ENCODE measurements at regions of chr21 and their contacts with region 1.

Region 1: GRCh38 chr21:41283211-41283818 is 33.3 kb upstream of the FAM3B start:
- H3K4me3 ChIP-seq: no peak overlapping the region
- H3K27ac ChIP-seq: no peak overlapping the region
- H3K4me1 ChIP-seq: no peaks in the 10 kb centered on the region
- CTCF ChIP-seq: peak; percentile 58

Region 2: DNA sequence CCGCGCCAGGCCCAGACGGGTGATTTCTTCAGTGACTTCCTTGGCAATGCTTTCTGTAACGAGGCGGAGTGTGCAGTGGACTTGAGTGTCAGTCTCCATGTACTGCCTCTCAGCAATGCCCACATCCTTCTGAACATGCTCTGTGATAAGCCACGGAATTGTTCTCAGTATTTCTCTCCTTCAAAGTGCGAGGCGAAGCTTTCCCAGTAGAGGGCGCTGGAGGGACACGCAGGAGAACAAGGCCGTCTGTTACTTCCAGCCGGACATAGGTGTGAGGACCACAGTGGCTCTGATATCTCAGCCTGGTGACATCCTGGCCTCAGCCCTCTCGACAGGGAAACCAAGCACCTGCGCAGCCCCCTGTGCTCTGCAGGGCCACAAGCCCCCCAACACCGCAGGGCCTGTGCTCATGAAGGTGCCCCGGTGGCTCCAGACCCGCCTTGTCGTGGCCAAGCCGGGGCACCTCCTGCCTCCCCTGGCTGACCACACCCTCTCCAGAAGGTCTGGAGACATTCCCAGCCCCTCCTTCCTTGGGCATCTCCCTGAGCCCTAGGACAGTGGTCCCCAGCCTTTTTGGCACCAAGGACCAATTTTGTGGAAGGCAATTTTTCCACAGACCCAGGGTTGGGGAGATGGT is 161.4 kb before region 1 on chr21:
- CTCF ChIA-PET with region 1: interaction called, 19 read pairs
- POLR2A ChIA-PET with region 1: no interaction called
- H3K4me3 ChIP-seq: no peak overlapping the region
- H3K27ac ChIP-seq: no peak overlapping the region
- H3K4me1 ChIP-seq: no peaks in the 10 kb centered on the region
- CTCF ChIP-seq: peak; percentile 76; the same call in 1 of the 2 replicates

Region 3: DNA sequence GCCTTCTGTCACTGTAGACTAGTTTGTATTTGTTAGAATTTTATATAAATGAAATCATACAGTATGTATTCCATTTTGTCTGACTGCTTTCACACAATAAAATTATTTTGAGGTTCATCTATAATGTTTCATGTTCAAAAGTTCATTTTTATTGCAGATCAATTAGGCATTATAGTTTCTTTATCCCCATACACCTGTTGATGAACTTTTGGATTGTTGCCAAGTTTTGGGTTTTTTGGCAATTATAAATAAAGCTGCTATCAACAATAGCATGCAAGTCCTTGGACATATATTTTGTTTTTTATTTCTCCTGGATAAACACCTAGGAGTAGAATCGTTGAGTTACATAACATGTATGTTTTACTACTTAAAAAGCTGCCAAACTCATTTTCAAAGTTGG is 13.8 kb before region 1 on chr21:
- CTCF ChIA-PET with region 1: interaction called, 44 read pairs
- POLR2A ChIA-PET with region 1: no interaction called
- H3K4me3 ChIP-seq: no peak overlapping the region
- H3K27ac ChIP-seq: no peak overlapping the region
- H3K4me1 ChIP-seq: no peaks in the 10 kb centered on the region
- CTCF ChIP-seq: no peak

Region 4: GRCh38 chr21:41411449-41412089 is 128.3 kb after region 1 on chr21:
- CTCF ChIA-PET with region 1: interaction called, 11 read pairs
- POLR2A ChIA-PET with region 1: no interaction called
- H3K4me3 ChIP-seq: no peak overlapping the region
- H3K27ac ChIP-seq: no peak overlapping the region
- H3K4me1 ChIP-seq: 0 out of 2 replicates have a peak, but pooled peaks cover 4% of the 10 kb centered on the region
- CTCF ChIP-seq: no peak

Region 5: GRCh38 chr21:41470054-41470453 is 186.7 kb after region 1 on chr21:
- CTCF ChIA-PET with region 1: interaction called, 18 read pairs
- POLR2A ChIA-PET with region 1: no interaction called
- H3K4me3 ChIP-seq: no peak overlapping the region
- H3K27ac ChIP-seq: no peak overlapping the region
- H3K4me1 ChIP-seq: no peaks in the 10 kb centered on the region
- CTCF ChIP-seq: no peak

Measured in HEK293 (cell line).